PC-3 (cell line): ENCODE measurements at regions of chr14 and their contacts with region 1.

Region 1: DNA sequence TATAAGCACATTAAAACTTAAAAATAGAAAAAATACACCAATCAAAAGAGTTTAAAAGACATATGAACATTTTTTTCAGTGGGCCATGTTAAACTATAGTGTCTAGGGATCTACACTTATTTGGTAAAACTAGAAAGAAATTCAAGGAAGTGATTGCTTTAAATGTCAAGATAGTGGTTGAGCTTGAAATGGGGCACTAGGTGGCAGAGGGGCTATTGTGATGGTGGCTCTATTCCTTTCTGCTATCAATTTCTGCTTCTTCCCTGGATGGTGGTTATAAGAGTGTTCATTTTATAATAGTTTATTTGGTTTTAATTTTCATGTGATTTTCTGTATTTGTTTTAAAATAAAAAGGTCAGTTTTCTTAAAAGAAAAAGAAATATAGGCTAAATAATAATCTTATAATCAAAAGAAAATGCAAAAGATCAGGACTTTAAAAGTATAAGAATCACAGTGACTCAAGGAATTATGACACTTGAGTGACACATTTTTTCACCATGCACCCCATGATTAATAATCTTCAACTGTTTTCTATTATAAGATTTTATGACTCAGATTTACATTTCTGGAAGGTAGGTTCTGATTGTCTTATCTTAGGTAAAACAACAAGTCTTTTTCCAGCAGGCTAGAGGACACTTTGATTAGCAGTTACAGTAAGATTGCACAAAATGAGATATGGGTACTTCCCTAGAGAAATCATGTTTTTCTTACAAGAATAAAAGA is 137.5 kb downstream of the FSCB start:
- DNase-seq: peak; percentile 60
- ATAC-seq: no peak
- H3K4me3 ChIP-seq: no peak overlapping the region
- H3K27ac ChIP-seq: peak overlapping the region; percentile 46
- H3K4me1 ChIP-seq: peaks cover 59% of the 10 kb centered on the region
- H3K27me3 ChIP-seq: no peaks in the 10 kb centered on the region
- CTCF ChIP-seq: peak; percentile 41

Region 2: DNA sequence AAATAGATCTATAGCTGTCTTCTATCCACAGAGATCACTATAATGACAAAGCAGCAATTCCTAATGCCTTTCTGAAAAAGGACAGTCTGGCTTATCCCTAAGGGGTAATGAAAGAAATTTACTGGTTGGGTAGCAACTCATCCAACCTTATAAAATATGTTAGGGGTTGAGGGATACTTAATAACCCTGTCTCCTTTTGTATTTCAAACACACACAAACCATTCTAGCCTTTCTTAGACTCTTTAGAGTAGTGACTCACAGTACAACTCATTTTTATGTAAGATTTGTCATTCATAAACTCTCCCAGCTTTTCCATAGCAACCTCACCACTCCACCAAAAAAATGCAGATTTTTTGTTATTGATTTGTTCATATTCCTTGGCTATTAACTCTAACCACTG is 30.3 kb before region 1 on chr14:
- CTCF ChIA-PET with region 1: no interaction called
- POLR2A ChIA-PET with region 1: no interaction called
- intact Hi-C with region 1: loop called (anchors 1 kb)
- DNase-seq: peak; percentile 89
- ATAC-seq: peak; percentile 97
- H3K4me3 ChIP-seq: no peak overlapping the region
- H3K27ac ChIP-seq: peak overlapping the region; percentile 86
- H3K4me1 ChIP-seq: peaks cover 21% of the 10 kb centered on the region
- H3K27me3 ChIP-seq: no peaks in the 10 kb centered on the region
- CTCF ChIP-seq: no peak

Region 3: GRCh38 chr14:44564929-44565328 is 195.4 kb after region 1 on chr14:
- CTCF ChIA-PET with region 1: no interaction called
- POLR2A ChIA-PET with region 1: no interaction called
- intact Hi-C with region 1: loop called (anchors 5 kb)
- DNase-seq: peak; percentile 78
- ATAC-seq: peak; percentile 95
- H3K4me3 ChIP-seq: 0 out of 2 replicates have a peak overlapping the region, but pooled peaks have one; percentile 19
- H3K27ac ChIP-seq: peak overlapping the region; percentile 48
- H3K4me1 ChIP-seq: peaks cover 27% of the 10 kb centered on the region
- H3K27me3 ChIP-seq: no peaks in the 10 kb centered on the region
- CTCF ChIP-seq: no peak

Region 4: GRCh38 chr14:44701563-44702263 is 332.2 kb after region 1 on chr14:
- CTCF ChIA-PET with region 1: no interaction called
- POLR2A ChIA-PET with region 1: no interaction called
- intact Hi-C with region 1: loop called (anchors 1 kb)
- DNase-seq: peak; percentile 72
- ATAC-seq: peak; percentile 58
- H3K4me3 ChIP-seq: no peak overlapping the region
- H3K27ac ChIP-seq: no peak overlapping the region
- H3K4me1 ChIP-seq: peaks cover 27% of the 10 kb centered on the region
- H3K27me3 ChIP-seq: no peaks in the 10 kb centered on the region
- CTCF ChIP-seq: no peak

Region 5: GRCh38 chr14:45003924-45004323 is 634.4 kb after region 1 on chr14:
- CTCF ChIA-PET with region 1: no interaction called
- POLR2A ChIA-PET with region 1: interaction called, 11 read pairs
- intact Hi-C with region 1: no loop called
- DNase-seq: no peak
- ATAC-seq: peak; percentile 87
- H3K4me3 ChIP-seq: no peak overlapping the region
- H3K27ac ChIP-seq: no peak overlapping the region
- H3K4me1 ChIP-seq: peaks cover 12% of the 10 kb centered on the region
- H3K27me3 ChIP-seq: no peaks in the 10 kb centered on the region
- CTCF ChIP-seq: no peak